Mammary epithelial cell (primary cell): ENCODE measurements at regions of chr11 and their contacts with region 1.

Region 1: GRCh38 chr11:34706709-34707461 is 86.0 kb downstream of the EHF start:
- DNase-seq: peak; percentile 66
- H3K4me3 ChIP-seq: no peak overlapping the region
- H3K27ac ChIP-seq: no peak overlapping the region
- H3K4me1 ChIP-seq: no peaks in the 10 kb centered on the region
- H3K27me3 ChIP-seq: no peaks in the 10 kb centered on the region
- CTCF ChIP-seq: no peak

Region 2: GRCh38 chr11:34266090-34266912 is 440.6 kb before region 1 on chr11:
- CTCF ChIA-PET with region 1: no interaction called
- dilution Hi-C with region 1: no loop called
- in situ Hi-C with region 1: no loop called
- intact Hi-C with region 1: no loop called
- DNase-seq: peak; percentile 92
- H3K4me3 ChIP-seq: no peak overlapping the region
- H3K27ac ChIP-seq: no peak overlapping the region
- H3K4me1 ChIP-seq: peaks cover 25% of the 10 kb centered on the region
- H3K27me3 ChIP-seq: no peaks in the 10 kb centered on the region
- CTCF ChIP-seq: no peak

Region 3: DNA sequence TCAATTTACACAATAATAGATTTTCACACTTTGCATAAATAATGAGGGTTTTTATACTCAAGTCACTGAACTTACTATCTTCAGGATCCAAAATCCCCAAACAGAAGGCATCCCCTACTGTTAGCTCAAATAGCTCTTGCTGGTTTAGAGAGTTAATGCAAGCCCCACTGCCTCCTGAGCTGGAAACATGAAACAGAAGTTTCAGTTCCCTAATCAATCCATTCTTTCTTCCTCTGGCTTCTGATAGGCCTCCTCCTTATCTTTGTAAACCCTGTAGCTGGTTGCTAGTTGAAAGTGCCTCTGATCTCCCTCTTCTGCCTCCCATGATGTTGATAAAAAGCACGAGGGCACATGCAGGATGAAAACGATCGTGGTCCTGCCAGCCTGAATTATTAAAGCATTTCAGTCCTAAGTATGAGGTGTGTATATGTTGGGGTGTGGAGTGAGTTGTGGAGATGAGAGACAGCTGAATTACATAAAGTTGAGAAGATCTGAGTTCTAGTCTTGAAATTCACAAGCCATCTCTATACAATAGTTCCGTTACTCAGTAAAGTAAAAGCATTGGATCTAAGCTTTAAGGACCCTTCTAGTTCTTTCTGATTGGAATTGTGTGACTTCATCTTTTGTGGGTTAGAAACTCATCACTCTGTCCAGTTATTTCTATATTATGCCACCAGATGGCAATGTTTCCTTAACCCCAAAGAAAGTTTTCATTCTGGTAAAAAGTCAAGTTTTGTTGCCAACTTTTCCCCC is 121.0 kb before region 1 on chr11:
- CTCF ChIA-PET with region 1: no interaction called
- dilution Hi-C with region 1: no loop called
- in situ Hi-C with region 1: no loop called
- intact Hi-C with region 1: no loop called
- DNase-seq: peak; percentile 55
- H3K4me3 ChIP-seq: no peak overlapping the region
- H3K27ac ChIP-seq: no peak overlapping the region
- H3K4me1 ChIP-seq: no peaks in the 10 kb centered on the region
- H3K27me3 ChIP-seq: no peaks in the 10 kb centered on the region
- CTCF ChIP-seq: peak; percentile 52 to 70

Region 4: DNA sequence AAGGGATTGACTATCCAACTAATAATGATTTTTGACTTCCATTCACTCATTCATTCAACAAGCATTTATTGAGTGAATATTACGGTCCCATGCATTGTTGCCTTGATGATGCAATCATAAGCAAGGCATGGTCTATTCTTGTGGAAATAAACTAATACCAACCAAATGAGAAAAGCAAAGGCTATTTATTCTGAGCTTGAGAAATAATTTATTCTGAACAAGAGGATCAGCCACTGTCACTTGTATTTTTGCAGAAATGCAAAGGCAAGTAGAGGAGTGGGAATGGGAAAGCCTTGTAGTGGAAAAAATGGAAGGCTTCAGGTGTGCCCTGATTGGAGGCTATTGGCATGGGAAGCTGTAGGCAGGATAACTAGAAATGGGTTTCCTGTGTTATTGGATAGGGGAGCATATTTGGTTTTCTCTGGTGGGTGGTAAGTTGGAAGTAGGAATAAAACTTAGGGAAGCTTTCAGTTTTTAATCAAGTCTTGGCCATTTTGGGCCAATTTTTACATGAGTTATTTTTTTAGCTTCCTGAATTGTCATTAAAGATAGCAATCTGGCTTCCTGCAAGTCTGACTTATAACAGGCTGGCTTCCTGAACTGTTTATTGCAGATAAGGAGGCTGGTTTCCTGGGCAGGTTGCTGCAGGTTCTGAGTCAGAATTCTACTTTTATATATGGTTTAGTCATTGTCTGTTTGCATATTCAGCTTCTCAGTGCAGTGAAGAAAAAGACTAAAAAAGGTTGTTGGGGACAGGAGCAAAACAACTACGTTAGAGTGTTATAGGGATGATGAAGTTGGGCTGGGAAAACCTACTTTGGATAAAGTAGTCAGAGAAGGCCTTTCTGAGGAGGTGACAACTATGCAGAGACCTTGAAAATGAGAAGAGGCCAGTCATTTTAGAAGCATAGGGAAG is 102.6 kb after region 1 on chr11:
- CTCF ChIA-PET with region 1: no interaction called
- dilution Hi-C with region 1: loop called (anchors 5 kb)
- in situ Hi-C with region 1: no loop called
- intact Hi-C with region 1: no loop called
- DNase-seq: peak; percentile 79
- H3K4me3 ChIP-seq: no peak overlapping the region
- H3K27ac ChIP-seq: no peak overlapping the region
- H3K4me1 ChIP-seq: peaks cover 15% of the 10 kb centered on the region
- H3K27me3 ChIP-seq: no peaks in the 10 kb centered on the region
- CTCF ChIP-seq: no peak

Region 5: DNA sequence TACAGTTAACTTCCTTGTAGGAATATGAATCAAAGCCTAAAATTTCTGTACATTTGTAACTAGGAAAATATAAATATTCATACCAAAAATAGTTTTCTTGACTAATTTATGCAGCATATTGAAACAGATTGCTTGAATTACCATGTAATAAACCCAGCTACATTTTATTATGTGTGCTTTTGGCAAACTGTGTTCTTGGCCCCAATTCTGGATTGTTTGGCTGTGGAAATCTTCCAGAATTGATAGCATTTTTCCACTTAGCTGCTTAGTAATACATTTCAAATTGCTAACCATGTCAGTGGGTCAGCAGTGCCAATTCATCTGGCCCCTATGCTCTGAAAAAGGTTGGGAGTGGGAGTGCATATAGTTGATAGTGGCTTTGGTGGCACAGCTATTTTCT is 241.8 kb after region 1 on chr11:
- CTCF ChIA-PET with region 1: no interaction called
- dilution Hi-C with region 1: no loop called
- in situ Hi-C with region 1: no loop called
- intact Hi-C with region 1: no loop called
- DNase-seq: no peak
- H3K4me3 ChIP-seq: no peak overlapping the region
- H3K27ac ChIP-seq: no peak overlapping the region
- H3K4me1 ChIP-seq: no peaks in the 10 kb centered on the region
- H3K27me3 ChIP-seq: no peaks in the 10 kb centered on the region
- CTCF ChIP-seq: no peak

Region 6: DNA sequence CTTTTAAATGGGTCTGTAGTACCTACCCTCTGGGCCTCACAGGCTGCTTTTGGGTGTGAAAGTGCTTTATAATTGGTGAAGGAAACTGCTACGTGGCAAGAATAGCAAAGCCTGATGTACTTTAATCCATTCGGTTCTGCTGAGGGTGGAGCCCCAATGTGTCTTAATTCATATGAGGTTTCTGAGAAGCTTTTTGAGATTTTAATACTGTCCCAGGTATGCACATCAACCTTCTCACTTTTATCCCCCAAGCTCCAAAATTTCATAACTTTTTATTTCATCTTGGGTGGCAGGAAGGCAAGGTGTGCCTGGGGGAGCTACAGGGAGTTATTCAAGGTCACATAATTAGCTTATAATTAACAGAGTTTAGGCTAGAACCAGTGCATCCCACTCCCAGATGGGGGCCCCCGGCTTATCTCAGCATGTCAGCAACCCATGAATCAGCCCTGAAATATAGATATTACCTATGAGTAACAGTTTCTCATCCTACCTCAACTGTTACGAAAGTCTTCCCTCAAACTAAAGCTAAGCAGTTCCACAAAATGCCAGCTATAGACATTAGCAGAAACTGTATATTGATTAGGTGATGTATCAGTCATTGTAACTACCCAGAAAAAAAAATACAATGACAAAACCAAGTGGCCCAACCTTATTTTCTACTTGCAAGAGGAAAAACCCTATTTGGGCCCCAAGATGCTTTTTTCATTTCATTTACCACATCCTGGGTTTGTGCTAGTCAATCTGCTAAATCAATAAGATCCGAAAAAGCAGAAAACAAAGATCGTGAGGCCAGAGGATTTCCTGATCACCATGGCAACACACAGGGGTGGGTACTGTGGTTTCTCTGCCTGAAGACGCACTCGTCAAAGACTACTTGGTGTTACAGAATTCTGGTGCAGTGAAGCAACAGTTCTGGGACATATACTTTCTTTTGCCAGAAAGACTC is 458.8 kb after region 1 on chr11:
- CTCF ChIA-PET with region 1: no interaction called
- dilution Hi-C with region 1: no loop called
- in situ Hi-C with region 1: no loop called
- intact Hi-C with region 1: no loop called
- DNase-seq: peak; percentile 71
- H3K4me3 ChIP-seq: peak overlapping the region in 1 of 3 experiments; percentile 5
- H3K27ac ChIP-seq: peak overlapping the region; percentile 96
- H3K4me1 ChIP-seq: peaks cover 88% of the 10 kb centered on the region
- H3K27me3 ChIP-seq: no peaks in the 10 kb centered on the region
- CTCF ChIP-seq: no peak